ENCODE measurements at regions of chrX and their contacts with region 1.

Region 1: DNA sequence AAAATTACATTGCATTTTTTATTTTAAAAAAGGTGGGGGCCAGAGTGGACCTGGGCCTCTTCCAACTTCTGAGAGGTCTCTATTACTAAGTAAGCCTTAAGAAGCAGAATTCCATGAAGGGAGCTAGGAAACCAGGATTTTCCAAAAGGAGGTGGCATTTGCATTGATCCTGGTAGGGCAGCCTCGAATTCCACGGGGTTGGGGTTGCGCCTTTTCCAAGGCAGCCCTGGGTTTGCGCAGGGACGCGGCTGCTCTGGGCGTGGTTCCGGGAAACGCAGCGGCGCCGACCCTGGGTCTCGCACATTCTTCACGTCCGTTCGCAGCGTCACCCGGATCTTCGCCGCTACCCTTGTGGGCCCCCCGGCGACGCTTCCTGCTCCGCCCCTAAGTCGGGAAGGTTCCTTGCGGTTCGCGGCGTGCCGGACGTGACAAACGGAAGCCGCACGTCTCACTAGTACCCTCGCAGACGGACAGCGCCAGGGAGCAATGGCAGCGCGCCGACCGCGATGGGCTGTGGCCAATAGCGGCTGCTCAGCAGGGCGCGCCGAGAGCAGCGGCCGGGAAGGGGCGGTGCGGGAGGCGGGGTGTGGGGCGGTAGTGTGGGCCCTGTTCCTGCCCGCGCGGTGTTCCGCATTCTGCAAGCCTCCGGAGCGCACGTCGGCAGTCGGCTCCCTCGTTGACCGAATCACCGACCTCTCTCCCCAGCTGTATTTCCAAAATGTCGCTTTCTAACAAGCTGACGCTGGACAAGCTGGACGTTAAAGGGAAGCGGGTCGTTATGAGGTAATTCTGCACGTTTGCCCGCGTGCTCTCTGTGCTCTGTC is at the start of gene PGK1:
- DNase-seq: peak; percentile 96
- H3K4me3 Mint-ChIP-seq: peak within 1 kb of the TSS; percentile 93
- H3K27ac Mint-ChIP-seq: peak within 1 kb of the TSS; percentile 90
- H3K4me1 Mint-ChIP-seq: peaks cover 40% of the 10 kb centered on the region
- H3K27me3 Mint-ChIP-seq: no peaks in the 10 kb centered on the region
- total RNA-seq, gene PGK1: 908 to 924 TPM

Region 2: DNA sequence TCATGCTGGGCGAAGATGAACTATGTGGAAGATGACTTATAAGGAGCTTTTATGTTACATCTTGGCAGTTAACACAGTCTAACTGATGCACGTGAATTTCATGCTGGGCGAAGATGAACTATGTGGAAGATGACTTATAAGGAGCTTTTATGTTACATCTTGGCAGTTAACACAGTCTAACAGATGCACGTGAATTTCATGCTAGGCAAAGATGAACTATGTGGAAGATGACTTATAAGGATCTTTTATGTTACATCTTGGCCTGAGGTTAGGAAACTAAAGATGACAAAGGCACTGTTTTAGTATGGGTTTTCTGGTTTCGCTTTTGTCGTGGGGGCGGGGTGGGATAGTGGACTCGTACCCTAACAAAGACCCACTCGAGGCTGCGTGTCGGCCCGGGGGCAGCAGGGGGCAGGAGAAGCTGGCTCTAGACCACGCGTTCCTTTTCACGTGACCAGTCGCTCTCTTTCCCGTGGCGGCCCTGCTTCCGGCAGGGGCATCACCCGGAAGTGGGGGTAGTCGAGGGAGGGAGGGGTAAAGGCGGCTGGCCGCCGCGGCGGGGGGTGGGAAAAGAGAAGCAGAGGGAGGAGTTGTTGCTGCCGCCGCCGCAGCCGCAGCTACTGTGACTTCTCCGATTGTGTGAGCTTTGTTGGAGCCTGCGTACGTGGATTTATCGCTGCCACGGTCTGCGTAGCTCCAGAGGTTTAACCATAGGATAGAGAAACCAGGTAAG is 193.6 kb before region 1 on chrX and contains the start of gene ATP7A:
- CTCF ChIA-PET with region 1: no interaction called
- POLR2A ChIA-PET with region 1: no interaction called
- intact Hi-C with region 1: loop called (anchors 1 kb)
- DNase-seq: peak; percentile 95
- H3K4me3 Mint-ChIP-seq: peak within 1 kb of the TSS; percentile 99
- H3K27ac Mint-ChIP-seq: peak within 1 kb of the TSS; percentile 99
- H3K4me1 Mint-ChIP-seq: peaks cover 19% of the 10 kb centered on the region
- H3K27me3 Mint-ChIP-seq: no peaks in the 10 kb centered on the region
- total RNA-seq, gene ATP7A: 8.0 TPM

Region 3: DNA sequence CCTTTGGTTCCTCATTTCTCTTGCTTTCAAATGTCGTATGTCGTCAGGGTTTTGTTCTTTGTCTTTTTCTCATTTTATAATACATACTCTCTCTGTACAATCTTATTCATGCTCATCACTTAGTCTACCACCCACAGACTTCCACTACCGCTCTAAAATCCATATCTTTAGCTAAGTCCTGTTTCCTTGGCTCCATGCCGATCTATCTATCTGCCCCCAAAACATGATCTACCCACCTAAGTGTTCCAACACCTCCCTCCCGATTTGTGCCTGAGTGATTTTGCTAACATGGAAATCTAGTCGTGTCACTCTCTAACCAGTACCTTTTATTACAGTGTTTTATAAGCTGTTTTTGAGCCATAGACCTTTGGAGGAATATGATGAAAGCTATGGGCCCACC is 68.8 kb before region 1 on chrX:
- CTCF ChIA-PET with region 1: no interaction called
- POLR2A ChIA-PET with region 1: no interaction called
- intact Hi-C with region 1: no loop called
- DNase-seq: no peak
- H3K4me3 Mint-ChIP-seq: no peak overlapping the region
- H3K27ac Mint-ChIP-seq: no peak overlapping the region
- H3K4me1 Mint-ChIP-seq: no peaks in the 10 kb centered on the region
- H3K27me3 Mint-ChIP-seq: no peaks in the 10 kb centered on the region

Region 4: DNA sequence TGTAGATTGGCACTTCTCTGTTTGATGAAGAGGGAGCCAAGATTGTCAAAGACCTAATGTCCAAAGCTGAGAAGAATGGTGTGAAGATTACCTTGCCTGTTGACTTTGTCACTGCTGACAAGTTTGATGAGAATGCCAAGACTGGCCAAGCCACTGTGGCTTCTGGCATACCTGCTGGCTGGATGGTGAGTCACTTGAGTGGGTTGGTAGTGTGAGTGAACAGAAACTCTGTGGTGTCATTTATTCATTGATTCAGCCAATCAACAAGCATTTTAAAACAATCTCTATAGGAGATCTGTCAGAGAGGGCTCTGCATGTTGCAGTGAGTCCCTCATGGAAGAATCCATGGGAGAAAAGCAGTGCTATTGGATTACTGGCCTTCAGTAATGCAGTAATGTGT is 19.4 kb after region 1 on chrX:
- CTCF ChIA-PET with region 1: no interaction called
- POLR2A ChIA-PET with region 1: interaction called, 6 read pairs
- intact Hi-C with region 1: loop called (anchors 2 kb)
- DNase-seq: peak; percentile 59
- H3K4me3 Mint-ChIP-seq: no peak overlapping the region
- H3K27ac Mint-ChIP-seq: peak overlapping the region; percentile 80
- H3K4me1 Mint-ChIP-seq: peaks cover 32% of the 10 kb centered on the region
- H3K27me3 Mint-ChIP-seq: no peaks in the 10 kb centered on the region

Region 5: DNA sequence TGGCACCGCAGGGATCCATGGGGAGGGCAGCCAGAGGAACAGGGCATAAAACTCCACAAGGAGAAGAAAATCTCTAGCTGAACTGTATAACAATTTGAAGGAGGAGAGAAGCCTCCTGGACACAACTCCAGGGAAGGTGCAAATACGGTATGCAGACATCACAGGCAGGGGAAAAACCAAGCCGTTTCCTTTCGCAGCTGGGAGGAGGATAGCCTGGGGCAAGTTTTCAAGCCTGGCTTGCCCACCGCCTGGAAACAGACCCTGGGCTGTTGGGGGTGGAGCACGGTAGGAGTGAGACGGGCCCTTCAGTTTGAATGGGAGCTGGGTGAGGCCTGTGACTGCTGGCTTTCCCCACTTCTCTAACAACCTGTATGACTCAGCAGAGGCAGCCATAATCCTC is 79.0 kb after region 1 on chrX:
- CTCF ChIA-PET with region 1: no interaction called
- POLR2A ChIA-PET with region 1: no interaction called
- intact Hi-C with region 1: no loop called
- DNase-seq: no peak
- H3K4me3 Mint-ChIP-seq: no peak overlapping the region
- H3K27ac Mint-ChIP-seq: no peak overlapping the region
- H3K4me1 Mint-ChIP-seq: no peaks in the 10 kb centered on the region
- H3K27me3 Mint-ChIP-seq: no peaks in the 10 kb centered on the region

Region 6: DNA sequence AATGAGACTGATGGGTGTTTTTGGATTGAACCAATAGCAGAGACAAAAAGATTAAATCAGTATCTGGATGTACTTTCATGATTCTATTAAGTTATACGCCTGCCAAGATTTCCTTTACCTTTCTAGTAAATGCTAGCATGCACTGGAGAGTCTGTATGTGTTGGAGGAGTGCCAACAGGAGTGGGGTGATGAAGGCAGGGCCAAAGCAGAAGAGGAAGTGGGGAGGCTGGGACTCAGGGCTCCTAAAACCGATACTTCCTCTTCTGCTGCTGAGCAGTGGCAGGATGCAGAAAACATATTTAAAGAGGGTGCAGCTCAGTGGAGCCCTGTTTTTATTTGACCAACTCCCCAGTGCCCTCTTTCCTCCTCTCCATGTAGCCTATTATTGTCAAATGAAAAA is 218.0 kb after region 1 on chrX:
- CTCF ChIA-PET with region 1: no interaction called
- POLR2A ChIA-PET with region 1: no interaction called
- intact Hi-C with region 1: loop called (anchors 10 kb)
- DNase-seq: peak; percentile 64
- H3K4me3 Mint-ChIP-seq: peak overlapping the region; percentile 45
- H3K27ac Mint-ChIP-seq: peak overlapping the region; percentile 81
- H3K4me1 Mint-ChIP-seq: peaks cover 32% of the 10 kb centered on the region
- H3K27me3 Mint-ChIP-seq: no peaks in the 10 kb centered on the region

Region 7: GRCh38 chrX:79153348-79153747 is 1049.5 kb after region 1 on chrX:
- CTCF ChIA-PET with region 1: no interaction called
- POLR2A ChIA-PET with region 1: no interaction called
- intact Hi-C with region 1: loop called (anchors 10 kb)
- DNase-seq: no peak
- H3K4me3 Mint-ChIP-seq: peak overlapping the region; percentile 75
- H3K27ac Mint-ChIP-seq: peak overlapping the region; percentile 94
- H3K4me1 Mint-ChIP-seq: peaks cover 62% of the 10 kb centered on the region
- H3K27me3 Mint-ChIP-seq: no peaks in the 10 kb centered on the region